A673 (cell line): ENCODE measurements at regions of chr15 and their contacts with region 1.

Region 1: GRCh38 chr15:48062148-48062861 is 58.5 kb upstream of the SLC24A5 start:
- DNase-seq: peak; percentile 87
- H3K4me3 ChIP-seq: peak overlapping the region; percentile 18
- H3K27ac ChIP-seq: no peak overlapping the region
- H3K4me1 ChIP-seq: peaks cover 15% of the 10 kb centered on the region
- H3K27me3 ChIP-seq: peaks cover 10% of the 10 kb centered on the region
- CTCF ChIP-seq: no peak

Region 2: DNA sequence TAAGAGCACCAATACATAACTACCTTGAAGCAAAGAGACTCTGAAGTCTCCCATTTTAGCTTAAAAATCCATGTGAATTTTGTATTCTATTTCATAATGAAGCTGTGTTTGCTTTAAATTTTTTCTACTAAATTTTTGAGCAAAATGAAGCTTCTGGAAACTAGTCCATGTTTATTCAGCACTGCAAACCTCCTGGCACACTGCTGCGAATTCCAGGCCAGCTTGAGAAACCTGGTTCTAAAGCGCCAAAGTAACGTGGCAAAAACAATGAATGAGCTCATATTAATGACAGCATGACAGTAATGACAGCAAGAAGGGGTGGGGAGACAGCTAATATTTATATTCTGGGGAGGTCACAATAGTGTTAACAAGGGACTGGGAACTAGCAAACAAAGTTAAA is 722.9 kb after region 1 on chr15:
- CTCF ChIA-PET with region 1: no interaction called
- POLR2A ChIA-PET with region 1: interaction called, 19 read pairs
- intact Hi-C with region 1: no loop called
- DNase-seq: no peak
- H3K4me3 ChIP-seq: no peak overlapping the region
- H3K27ac ChIP-seq: no peak overlapping the region
- H3K4me1 ChIP-seq: no peaks in the 10 kb centered on the region
- H3K27me3 ChIP-seq: no peaks in the 10 kb centered on the region
- CTCF ChIP-seq: no peak